ENCODE measurements at regions of chr19 and their contacts with region 1.

Region 1: DNA sequence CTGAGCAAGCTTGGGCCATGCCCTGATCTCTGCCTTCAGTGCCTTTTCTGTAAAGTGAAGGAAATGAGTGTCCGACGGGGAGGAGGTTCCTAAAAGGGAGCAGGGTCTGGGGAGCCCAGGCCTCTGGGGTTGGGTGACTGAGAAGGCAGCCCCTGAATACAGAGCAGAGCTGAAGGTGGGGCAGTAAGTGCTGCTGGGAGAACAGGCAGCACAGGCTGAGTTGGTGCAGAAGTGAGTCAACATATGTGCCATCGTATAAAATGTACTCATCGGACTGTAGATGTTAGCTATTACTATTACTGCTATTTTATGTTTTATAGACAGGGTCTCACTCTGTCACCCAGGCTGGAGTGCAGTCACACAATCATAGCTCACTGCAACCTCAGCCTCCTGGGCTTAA is 1.0 kb upstream of the HAMP start:
- DNase-seq: no peak
- ATAC-seq: no peak
- H3K4me3 Mint-ChIP-seq: no peak overlapping the region
- H3K27ac Mint-ChIP-seq: peak overlapping the region; percentile 82; the same call in 1 of the 2 replicates
- H3K4me1 Mint-ChIP-seq: peaks cover 11% of the 10 kb centered on the region
- H3K27me3 Mint-ChIP-seq: no peaks in the 10 kb centered on the region; the same call in none of the 2 replicates
- CTCF ChIP-seq: no peak

Region 2: DNA sequence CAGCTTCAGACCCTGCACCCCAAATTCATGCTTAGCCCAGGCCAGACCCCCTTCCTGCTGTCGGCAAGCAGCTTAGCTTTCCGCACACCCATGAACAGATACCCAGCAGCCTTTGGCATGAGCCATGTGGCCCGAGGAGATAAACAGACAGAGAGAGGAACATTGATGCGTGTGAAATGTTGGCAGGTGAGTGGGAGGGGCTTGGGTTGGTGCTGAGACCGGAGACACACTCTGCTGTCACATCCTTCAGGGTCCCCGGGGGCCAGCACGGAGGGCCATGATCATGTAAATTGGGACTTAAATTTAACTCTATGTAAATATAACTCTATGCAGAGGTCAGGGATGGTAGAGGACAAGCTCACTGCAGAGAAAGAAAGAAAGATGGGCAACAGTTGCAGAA is 49.2 kb after region 1 on chr19:
- CTCF ChIA-PET with region 1: no interaction called
- POLR2A ChIA-PET with region 1: interaction called, 10 read pairs
- DNase-seq: no peak
- ATAC-seq: no peak
- H3K4me3 Mint-ChIP-seq: no peak overlapping the region
- H3K27ac Mint-ChIP-seq: peak overlapping the region; percentile 86; the same call in 1 of the 2 replicates
- H3K4me1 Mint-ChIP-seq: peaks cover 13% of the 10 kb centered on the region
- H3K27me3 Mint-ChIP-seq: no peaks in the 10 kb centered on the region; the same call in 1 of the 2 replicates
- CTCF ChIP-seq: no peak

Measured in WTC11 (cell line).